ENCODE measurements at regions of chr6 and their contacts with region 1.

Region 1: GRCh38 chr6:43774776-43775534 is 4.9 kb downstream of the VEGFA start:
- H3K4me3 ChIP-seq: no peak overlapping the region
- H3K27ac ChIP-seq: no peak overlapping the region
- H3K4me1 ChIP-seq: peaks cover 10% of the 10 kb centered on the region
- CTCF ChIP-seq: peak; percentile 81

Region 2: GRCh38 chr6:43436577-43437282 is 338.2 kb before region 1 on chr6:
- CTCF ChIA-PET with region 1: no interaction called
- POLR2A ChIA-PET with region 1: no interaction called
- H3K4me3 ChIP-seq: no peak overlapping the region
- H3K27ac ChIP-seq: no peak overlapping the region
- H3K4me1 ChIP-seq: peaks cover 6% of the 10 kb centered on the region
- CTCF ChIP-seq: no peak

Region 3: DNA sequence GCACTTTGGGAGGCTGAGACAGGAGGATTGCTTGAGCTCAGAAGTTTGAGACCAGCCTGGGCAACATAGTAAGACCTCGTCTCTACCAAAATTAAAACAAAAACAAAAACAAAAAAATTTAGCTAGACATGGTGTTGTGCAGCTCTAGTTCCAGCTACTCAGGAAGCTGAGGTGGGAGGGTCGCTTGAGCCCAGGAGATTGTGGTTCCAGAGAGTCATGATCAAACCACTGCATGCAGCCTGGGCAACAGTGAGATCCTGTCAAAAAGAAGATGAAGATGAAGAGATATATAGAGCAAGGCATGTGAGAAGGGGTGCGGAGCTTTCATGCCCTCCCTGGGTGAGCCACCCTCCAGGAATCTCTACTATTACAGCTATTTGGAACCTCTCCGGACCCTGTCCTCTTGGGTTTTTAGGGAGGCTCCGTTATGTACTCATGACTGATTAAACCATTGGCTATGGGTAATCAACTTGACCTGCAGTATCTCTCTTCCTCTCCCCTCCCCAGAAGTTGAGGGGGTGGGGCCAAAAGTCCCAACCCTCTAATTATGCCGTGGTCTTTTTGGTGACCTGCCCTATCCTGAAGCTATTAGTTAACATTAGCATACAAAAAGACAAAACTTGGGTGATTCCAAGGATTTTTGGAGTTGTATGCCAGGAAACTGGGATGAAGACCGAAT is 189.9 kb before region 1 on chr6:
- CTCF ChIA-PET with region 1: no interaction called
- POLR2A ChIA-PET with region 1: no interaction called
- H3K4me3 ChIP-seq: no peak overlapping the region
- H3K27ac ChIP-seq: no peak overlapping the region
- H3K4me1 ChIP-seq: no peaks in the 10 kb centered on the region
- CTCF ChIP-seq: no peak

Region 4: GRCh38 chr6:43723737-43724295 is 51.1 kb before region 1 on chr6:
- CTCF ChIA-PET with region 1: interaction called, 30 read pairs
- POLR2A ChIA-PET with region 1: interaction called, 40 read pairs
- H3K4me3 ChIP-seq: no peak overlapping the region
- H3K27ac ChIP-seq: no peak overlapping the region
- H3K4me1 ChIP-seq: peaks cover 10% of the 10 kb centered on the region
- CTCF ChIP-seq: peak; percentile 89

Region 5: DNA sequence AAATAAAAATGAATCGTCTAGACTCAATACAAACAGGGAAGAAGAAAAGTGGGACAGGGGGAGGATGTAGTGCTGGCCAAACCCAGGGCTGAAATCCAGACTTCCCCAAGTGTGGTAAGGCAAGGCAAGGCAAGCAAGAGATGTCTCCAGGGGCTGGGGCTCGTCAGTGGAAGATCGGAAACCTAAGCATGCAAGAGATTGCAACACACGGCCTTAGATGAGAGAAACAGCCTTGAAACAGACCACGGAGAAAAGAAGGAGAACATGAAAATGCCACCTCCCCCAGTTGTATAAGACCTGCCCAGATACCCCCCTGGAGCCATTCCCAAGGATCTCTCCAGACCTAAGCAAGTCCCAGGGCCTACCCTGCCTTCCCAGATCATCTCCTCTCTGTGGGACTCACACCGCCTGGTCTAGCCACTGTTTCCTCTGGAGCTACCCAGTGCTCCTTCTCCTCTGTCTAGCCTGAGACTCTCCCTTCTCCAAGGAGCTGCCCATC is 15.1 kb after region 1 on chr6:
- CTCF ChIA-PET with region 1: interaction called, 23 read pairs
- POLR2A ChIA-PET with region 1: interaction called, 10 read pairs
- H3K4me3 ChIP-seq: no peak overlapping the region
- H3K27ac ChIP-seq: no peak overlapping the region
- H3K4me1 ChIP-seq: no peaks in the 10 kb centered on the region
- CTCF ChIP-seq: no peak

Region 6: GRCh38 chr6:43817192-43817591 is 42.2 kb after region 1 on chr6:
- CTCF ChIA-PET with region 1: interaction called, 10 read pairs
- POLR2A ChIA-PET with region 1: interaction called, 5 read pairs
- H3K4me3 ChIP-seq: no peak overlapping the region
- H3K27ac ChIP-seq: no peak overlapping the region
- H3K4me1 ChIP-seq: no peaks in the 10 kb centered on the region
- CTCF ChIP-seq: peak; percentile 58

Region 7: GRCh38 chr6:44230951-44231350 is 456.0 kb after region 1 on chr6:
- CTCF ChIA-PET with region 1: no interaction called
- POLR2A ChIA-PET with region 1: no interaction called
- H3K4me3 ChIP-seq: no peak overlapping the region
- H3K27ac ChIP-seq: no peak overlapping the region
- H3K4me1 ChIP-seq: peaks cover 7% of the 10 kb centered on the region
- CTCF ChIP-seq: no peak